Right ventricle myocardium superior (tissue), 1 donor: ENCODE measurements at regions of chr17 and their contacts with region 1.

Region 1: GRCh38 chr17:39916918-39917317 is 1.5 kb downstream of the GSDMB start:
- DNase-seq: no peak
- ATAC-seq: no peak

Region 2: GRCh38 chr17:39954876-39955275 is 38.0 kb after region 1 on chr17:
- intact Hi-C with region 1: loop called (anchors 5 kb)
- DNase-seq: no peak
- ATAC-seq: no peak